ENCODE measurements at regions of chr19 and their contacts with region 1.

Region 1: GRCh38 chr19:30669329-30670010 is 297.3 kb downstream of the ZNF536 start:
- DNase-seq: peak; percentile 66 to 72
- H3K4me3 ChIP-seq: no peak overlapping the region
- H3K27ac ChIP-seq: no peak overlapping the region
- H3K4me1 ChIP-seq: peaks cover 0 to 3% of the 10 kb centered on the region in 2 donors
- H3K27me3 ChIP-seq: no peaks in the 10 kb centered on the region
- CTCF ChIP-seq: peak; percentile 28 to 83 (median 60)
- POLR2A ChIP-seq: no peak

Region 2: GRCh38 chr19:30516531-30516930 is 152.9 kb before region 1 on chr19:
- intact Hi-C with region 1: no loop called
- DNase-seq: no peak
- H3K4me3 ChIP-seq: no peak overlapping the region
- H3K27ac ChIP-seq: no peak overlapping the region
- H3K4me1 ChIP-seq: no peaks in the 10 kb centered on the region
- H3K27me3 ChIP-seq: no peaks in the 10 kb centered on the region
- CTCF ChIP-seq: no peak
- POLR2A ChIP-seq: no peak

Region 3: GRCh38 chr19:30602661-30603350 is 66.7 kb before region 1 on chr19:
- intact Hi-C with region 1: no loop called
- DNase-seq: no peak
- H3K4me3 ChIP-seq: no peak overlapping the region
- H3K27ac ChIP-seq: no peak overlapping the region
- H3K4me1 ChIP-seq: no peaks in the 10 kb centered on the region
- H3K27me3 ChIP-seq: no peaks in the 10 kb centered on the region
- CTCF ChIP-seq: no peak
- POLR2A ChIP-seq: no peak

Region 4: DNA sequence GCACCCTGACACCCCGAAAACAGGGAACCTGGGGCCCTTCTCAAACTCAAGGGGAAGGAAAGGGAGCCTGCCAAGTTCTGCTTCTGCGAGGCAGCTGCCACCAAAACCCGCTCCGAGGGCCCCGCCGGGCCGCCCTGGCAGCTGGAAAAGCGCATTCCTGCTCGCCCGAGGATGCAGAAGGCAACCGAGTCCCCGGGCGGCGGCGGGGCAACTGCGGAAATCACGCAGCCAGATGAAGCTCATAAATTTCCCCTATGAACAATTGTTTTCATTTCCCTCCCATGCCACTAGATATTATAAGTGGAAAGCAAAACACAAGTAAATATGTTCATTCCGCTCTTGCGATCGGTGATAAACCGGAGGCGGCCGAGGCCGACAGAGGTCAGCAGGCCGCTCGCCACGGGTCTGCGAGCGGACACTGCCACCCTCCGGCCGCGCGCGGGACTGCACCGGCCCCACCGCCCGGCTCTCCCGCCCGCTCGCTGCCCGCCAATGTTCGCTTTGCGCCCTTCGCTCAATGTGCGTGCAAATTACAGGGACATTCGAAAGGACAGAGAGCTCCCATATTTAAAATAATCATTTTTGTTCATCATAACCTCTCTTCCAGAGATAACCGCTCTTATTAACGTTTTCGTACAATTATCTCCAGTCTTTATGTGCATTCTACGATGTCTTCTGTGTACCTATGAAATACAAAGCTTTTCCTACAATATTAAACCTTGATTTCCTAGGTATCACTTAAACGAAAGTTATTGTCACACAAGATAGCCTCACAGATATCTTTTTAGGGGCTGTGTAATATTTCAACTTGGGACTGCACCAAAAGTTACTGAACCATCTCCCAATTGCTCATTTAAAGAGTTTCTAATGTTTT is 1555.1 kb after region 1 on chr19:
- intact Hi-C with region 1: loop called (anchors 5 kb)
- DNase-seq: peak; percentile 46 to 56
- H3K4me3 ChIP-seq: no peak overlapping the region
- H3K27ac ChIP-seq: no peak overlapping the region
- H3K4me1 ChIP-seq: peaks cover 0 to 3% of the 10 kb centered on the region in 2 donors
- H3K27me3 ChIP-seq: no peaks in the 10 kb centered on the region
- CTCF ChIP-seq: peak; percentile 78 to 100 (median 98)
- POLR2A ChIP-seq: no peak

Measured in thyroid gland (tissue), 4 donors.